Right ventricle myocardium inferior (tissue), 1 donor: ENCODE measurements at regions of chr11 and their contacts with region 1.

Region 1: GRCh38 chr11:44110231-44110679 is 14.8 kb downstream of the EXT2 start:
- DNase-seq: no peak
- ATAC-seq: peak; percentile 76

Region 2: DNA sequence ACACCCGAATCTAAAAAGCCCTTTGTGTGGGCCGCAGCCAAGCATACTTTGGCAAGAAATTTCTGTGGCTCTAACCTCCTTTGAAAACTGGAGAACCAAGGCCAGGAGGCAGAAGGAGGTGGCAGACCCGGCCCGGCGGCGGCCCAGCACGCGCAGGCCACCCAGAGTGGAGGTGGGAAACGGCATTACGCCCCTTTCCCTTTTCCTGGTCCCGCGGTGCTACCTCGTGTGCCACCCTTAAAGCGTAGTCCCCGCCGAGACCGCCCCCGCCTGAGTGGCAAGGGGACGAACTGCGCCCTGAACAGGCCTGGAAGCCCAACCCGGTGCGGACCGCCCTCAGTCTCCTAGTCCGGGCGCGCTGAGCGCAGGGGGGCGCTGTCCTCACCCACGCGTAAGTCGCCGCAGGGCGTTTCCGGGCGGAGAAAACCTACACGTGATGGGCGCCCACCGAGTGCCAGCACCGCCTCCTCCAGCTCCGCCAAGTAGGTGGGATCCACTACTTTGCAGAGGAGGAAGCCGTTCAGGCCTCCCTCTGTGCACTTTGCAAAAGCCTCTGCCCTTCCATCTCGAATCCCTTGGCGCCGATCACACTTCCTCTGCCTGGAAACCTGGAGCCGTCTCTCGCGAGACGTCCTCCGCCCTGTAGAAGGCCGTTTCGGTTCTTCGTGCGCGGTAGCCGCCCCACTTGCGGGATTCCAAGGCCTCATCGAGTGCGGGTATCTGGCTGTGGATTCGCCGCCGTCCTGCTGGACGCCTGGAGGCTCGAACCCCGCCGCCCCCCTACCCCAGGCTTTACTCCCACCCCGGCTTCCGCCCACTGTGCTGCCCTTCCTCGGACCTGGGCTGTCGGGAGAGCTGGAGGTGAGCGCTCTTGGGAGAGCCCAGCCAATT is 44.2 kb before region 1 on chr11 and contains the start of gene ACCS:
- intact Hi-C with region 1: loop called (anchors 1 kb)
- DNase-seq: peak; percentile 99
- ATAC-seq: peak; percentile 97
- total RNA-seq, gene ACCS: 7.0 TPM

Region 3: DNA sequence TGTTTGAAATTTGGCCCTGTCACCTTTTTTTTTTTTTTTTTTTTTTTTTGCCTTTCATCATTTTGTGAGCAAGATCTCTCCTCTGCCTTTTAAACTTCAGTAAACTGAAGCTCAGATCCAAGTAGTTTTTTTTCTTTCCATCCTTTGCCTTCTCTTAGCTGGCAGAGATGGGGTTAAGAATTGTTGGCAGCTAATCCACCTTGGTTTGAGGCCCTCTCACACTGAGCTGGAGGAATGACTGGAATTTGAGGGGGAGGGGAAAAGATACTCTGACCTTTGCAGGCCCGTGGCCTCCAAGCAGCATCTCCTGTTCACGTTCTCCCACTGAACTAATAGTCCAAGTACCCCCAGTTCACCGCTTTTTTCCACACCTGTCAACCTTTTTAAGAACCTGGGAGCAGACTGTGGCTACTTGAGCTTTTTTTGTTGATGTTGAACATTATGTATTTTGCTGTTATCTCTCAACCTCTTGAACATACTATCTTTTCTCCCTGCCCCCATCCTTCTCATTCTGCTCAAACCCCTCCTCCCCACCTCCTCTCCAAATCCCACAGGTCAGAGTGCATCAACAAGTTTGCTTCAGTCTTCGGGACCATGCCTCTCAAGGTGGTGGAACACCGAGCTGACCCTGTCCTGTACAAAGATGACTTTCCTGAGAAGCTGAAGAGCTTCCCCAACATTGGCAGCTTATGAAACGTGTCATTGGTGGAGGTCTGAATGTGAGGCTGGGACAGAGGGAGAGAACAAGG is 133.5 kb after region 1 on chr11:
- intact Hi-C with region 1: no loop called
- DNase-seq: no peak
- ATAC-seq: no peak